ENCODE measurements at regions of chr2 and their contacts with region 1.

Region 1: GRCh38 chr2:9142551-9143263 is 63.9 kb upstream of the ASAP2 start:
- DNase-seq: peak; percentile 72 to 98 (median 84)
- ATAC-seq: peak; percentile 96
- H3K4me3 ChIP-seq: peak overlapping the region in 1 of 2 donors; percentile 2
- H3K27ac ChIP-seq: peak overlapping the region in 1 of 2 donors; percentile 20
- H3K4me1 ChIP-seq: peaks cover 5 to 16% of the 10 kb centered on the region in 2 donors
- H3K27me3 ChIP-seq: no peaks in the 10 kb centered on the region
- CTCF ChIP-seq: peak; percentile 98 to 99

Region 2: GRCh38 chr2:8872821-8873432 is 269.8 kb before region 1 on chr2:
- intact Hi-C with region 1: loop called in 1 of 2 experiments (anchors 10 kb)
- DNase-seq: peak in 2 of 4 donors; percentile 20 to 43
- ATAC-seq: peak; percentile 75
- H3K4me3 ChIP-seq: no peak overlapping the region
- H3K27ac ChIP-seq: no peak overlapping the region
- H3K4me1 ChIP-seq: no peaks in the 10 kb centered on the region
- H3K27me3 ChIP-seq: no peaks in the 10 kb centered on the region
- CTCF ChIP-seq: peak; percentile 26 to 48

Region 3: GRCh38 chr2:9251154-9252001 is 108.7 kb after region 1 on chr2:
- intact Hi-C with region 1: no loop called
- DNase-seq: peak in 1 of 4 donors; percentile 27
- ATAC-seq: peak; percentile 58
- H3K4me3 ChIP-seq: no peak overlapping the region
- H3K27ac ChIP-seq: peak overlapping the region in 1 of 2 donors; percentile 57
- H3K4me1 ChIP-seq: peaks cover 11 to 37% of the 10 kb centered on the region in 2 donors
- H3K27me3 ChIP-seq: no peaks in the 10 kb centered on the region
- CTCF ChIP-seq: no peak

Region 4: DNA sequence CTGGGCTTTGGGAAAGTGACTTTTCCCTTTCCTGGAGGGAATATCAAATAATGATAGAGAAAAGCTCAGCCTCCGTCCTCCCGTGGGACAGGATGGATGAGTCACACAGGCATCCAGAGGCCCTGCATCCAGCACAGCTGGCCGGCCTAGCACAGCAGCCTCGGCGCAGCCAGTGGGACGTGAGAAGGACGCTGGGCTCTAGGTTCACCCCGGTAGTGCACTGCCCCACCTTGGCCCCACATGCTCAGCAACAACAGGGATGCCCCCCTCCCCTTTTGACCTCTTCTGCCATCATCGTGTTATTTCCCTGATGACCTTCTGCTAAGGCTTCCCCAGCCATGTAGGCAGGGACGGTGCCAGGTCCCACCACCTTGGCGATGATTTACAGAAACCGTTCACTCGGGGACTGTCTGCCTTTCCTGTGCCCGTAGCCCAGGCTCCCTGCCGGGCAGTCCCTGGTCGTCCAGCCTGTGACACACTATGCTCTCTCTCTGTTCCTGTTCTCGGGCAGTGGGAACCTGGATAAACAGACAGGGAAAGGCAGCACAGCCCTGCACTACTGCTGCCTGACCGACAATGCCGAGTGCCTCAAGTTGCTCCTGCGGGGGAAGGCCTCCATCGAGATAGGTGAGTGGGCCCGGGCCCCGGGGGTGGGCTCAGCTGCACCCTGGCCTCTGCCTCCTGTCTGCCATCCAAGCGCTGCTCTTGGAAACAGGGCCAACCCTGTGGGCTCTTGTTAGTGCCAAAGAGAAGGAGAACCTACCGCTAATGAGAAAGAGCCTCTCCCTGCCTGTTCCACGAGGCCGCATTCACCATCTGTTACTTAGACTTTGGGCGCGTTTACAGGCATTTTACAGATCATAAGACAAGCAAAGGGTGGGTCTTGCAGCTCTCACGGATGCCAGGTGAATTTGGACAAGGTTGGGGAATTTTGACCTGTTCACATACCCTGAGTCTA is 236.0 kb after region 1 on chr2:
- intact Hi-C with region 1: loop called in 1 of 2 experiments (anchors 10 kb)
- DNase-seq: peak in 2 of 4 donors; percentile 49 to 77
- ATAC-seq: peak; percentile 77
- H3K4me3 ChIP-seq: no peak overlapping the region
- H3K27ac ChIP-seq: peak overlapping the region; percentile 59 to 63
- H3K4me1 ChIP-seq: no peaks in the 10 kb centered on the region
- H3K27me3 ChIP-seq: no peaks in the 10 kb centered on the region
- CTCF ChIP-seq: no peak

Region 5: GRCh38 chr2:9681427-9681817 is 538.7 kb after region 1 on chr2:
- intact Hi-C with region 1: no loop called
- DNase-seq: peak in 1 of 4 donors; percentile 30
- ATAC-seq: peak; percentile 33
- H3K4me3 ChIP-seq: no peak overlapping the region
- H3K27ac ChIP-seq: no peak overlapping the region
- H3K4me1 ChIP-seq: peaks cover 0 to 12% of the 10 kb centered on the region in 2 donors
- H3K27me3 ChIP-seq: no peaks in the 10 kb centered on the region
- CTCF ChIP-seq: no peak

Measured in left lung (tissue), 14 donors.